ENCODE measurements at regions of chr20 and their contacts with region 1.

Region 1: GRCh38 chr20:1313236-1313964 is 15.5 kb downstream of the SDCBP2 start:
- DNase-seq: peak; percentile 56 to 87
- H3K4me3 ChIP-seq: no peak overlapping the region
- H3K4me1 ChIP-seq: 0 out of 2 replicates have a peak, but pooled peaks cover 3% of the 10 kb centered on the region
- H3K27me3 ChIP-seq: no peaks in the 10 kb centered on the region

Region 2: GRCh38 chr20:1440024-1440423 is 126.6 kb after region 1 on chr20:
- in situ Hi-C with region 1: loop called (anchors 5 kb)
- DNase-seq: no peak
- H3K4me3 ChIP-seq: no peak overlapping the region
- H3K4me1 ChIP-seq: no peaks in the 10 kb centered on the region
- H3K27me3 ChIP-seq: no peaks in the 10 kb centered on the region

Region 3: DNA sequence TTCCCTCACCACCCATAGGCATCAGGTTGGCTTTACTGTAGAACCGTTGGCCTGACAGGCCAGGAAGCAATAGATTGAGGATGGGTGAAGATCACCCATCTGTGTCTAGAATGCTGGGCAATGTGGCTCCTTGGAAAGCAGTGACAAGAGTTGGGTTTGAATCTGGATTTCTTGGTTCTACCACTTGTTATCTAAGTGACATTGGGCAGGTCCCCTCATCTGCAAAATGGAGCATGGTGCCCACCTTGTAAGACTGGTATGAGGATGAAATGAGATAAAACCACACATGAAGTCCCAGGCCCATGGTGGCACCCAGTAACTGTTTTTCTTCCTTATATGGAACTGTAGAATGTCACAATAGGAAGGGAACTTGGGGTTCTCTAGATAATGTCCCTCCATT is 200.4 kb after region 1 on chr20:
- in situ Hi-C with region 1: no loop called
- DNase-seq: no peak
- H3K4me3 ChIP-seq: no peak overlapping the region
- H3K4me1 ChIP-seq: no peaks in the 10 kb centered on the region
- H3K27me3 ChIP-seq: no peaks in the 10 kb centered on the region